CD4-positive, alpha-beta T cell (primary cell): ENCODE measurements at regions of chr10 and their contacts with region 1.

Region 1: GRCh38 chr10:49407552-49408137 is 11.8 kb upstream of the DRGX start:
- DNase-seq: peak; percentile 46 to 79 (median 66)
- ATAC-seq: peak; percentile 54
- H3K4me3 ChIP-seq: no peak overlapping the region
- H3K4me3 Mint-ChIP-seq: no peak overlapping the region
- H3K27ac ChIP-seq: no peak overlapping the region
- H3K27ac Mint-ChIP-seq: no peak overlapping the region
- H3K4me1 ChIP-seq: no peaks in the 10 kb centered on the region
- H3K4me1 Mint-ChIP-seq: no peaks in the 10 kb centered on the region
- H3K27me3 ChIP-seq: peaks cover 19 to 40% of the 10 kb centered on the region in 2 experiments
- H3K27me3 Mint-ChIP-seq: peaks cover 83% of the 10 kb centered on the region
- CTCF ChIP-seq: peak; percentile 70

Region 2: GRCh38 chr10:49068672-49069217 is 338.9 kb before region 1 on chr10:
- CTCF ChIA-PET with region 1: no interaction called
- POLR2A ChIA-PET with region 1: no interaction called
- intact Hi-C with region 1: no loop called
- DNase-seq: no peak
- ATAC-seq: no peak
- H3K4me3 ChIP-seq: no peak overlapping the region
- H3K4me3 Mint-ChIP-seq: no peak overlapping the region
- H3K27ac ChIP-seq: no peak overlapping the region
- H3K27ac Mint-ChIP-seq: no peak overlapping the region
- H3K4me1 ChIP-seq: no peaks in the 10 kb centered on the region
- H3K4me1 Mint-ChIP-seq: no peaks in the 10 kb centered on the region
- H3K27me3 ChIP-seq: peaks cover 0 to 10% of the 10 kb centered on the region in 2 experiments
- H3K27me3 Mint-ChIP-seq: peaks cover 11% of the 10 kb centered on the region
- CTCF ChIP-seq: no peak

Region 3: DNA sequence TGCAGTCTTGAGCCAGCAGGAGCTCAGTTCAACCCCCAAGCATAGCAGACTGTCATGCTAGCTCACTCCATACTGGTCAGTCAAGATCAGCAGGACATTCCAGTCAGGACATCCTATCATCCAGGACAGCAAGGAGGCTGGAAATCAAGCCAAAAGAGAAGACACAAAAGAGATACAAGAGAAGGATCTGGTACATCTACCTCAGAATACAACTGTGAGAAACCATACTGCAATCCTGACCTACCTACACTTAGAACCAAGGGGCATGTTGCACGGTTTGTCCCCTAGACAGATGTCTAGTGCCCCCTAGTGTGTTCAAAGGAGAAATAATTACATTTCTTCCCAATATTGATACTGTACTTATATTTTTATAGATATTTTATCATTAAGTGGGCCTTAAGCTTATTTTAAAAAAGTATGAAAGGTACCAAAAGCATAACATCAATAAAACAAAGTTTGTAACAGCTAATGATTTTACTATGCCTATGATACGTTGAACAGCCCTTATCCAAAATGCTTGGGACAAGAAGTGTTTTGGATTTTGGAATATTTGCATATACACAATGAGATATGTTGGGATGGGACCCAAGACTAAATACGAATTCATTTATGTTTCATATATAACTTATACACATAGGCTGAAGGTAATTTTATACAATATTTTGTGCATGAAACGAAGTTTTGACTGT is 104.6 kb after region 1 on chr10:
- CTCF ChIA-PET with region 1: interaction called, 21 read pairs
- POLR2A ChIA-PET with region 1: interaction called, 7 read pairs
- intact Hi-C with region 1: loop called in 1 of 2 experiments (anchors 1 kb)
- DNase-seq: peak in 4 of 14 experiments; percentile 15 to 58 (median 56)
- ATAC-seq: peak; percentile 51
- H3K4me3 ChIP-seq: no peak overlapping the region
- H3K4me3 Mint-ChIP-seq: no peak overlapping the region
- H3K27ac ChIP-seq: no peak overlapping the region
- H3K27ac Mint-ChIP-seq: no peak overlapping the region
- H3K4me1 ChIP-seq: peaks cover 10% of the 10 kb centered on the region
- H3K4me1 Mint-ChIP-seq: peaks cover 28% of the 10 kb centered on the region
- H3K27me3 ChIP-seq: peaks cover 0 to 2% of the 10 kb centered on the region in 2 experiments
- H3K27me3 Mint-ChIP-seq: peaks cover 20% of the 10 kb centered on the region
- CTCF ChIP-seq: peak; percentile 78

Region 4: GRCh38 chr10:49518982-49519578 is 111.4 kb after region 1 on chr10:
- CTCF ChIA-PET with region 1: interaction called, 7 read pairs
- POLR2A ChIA-PET with region 1: no interaction called
- intact Hi-C with region 1: loop called in 1 of 2 experiments (anchors 1 kb)
- DNase-seq: peak in 5 of 14 experiments; percentile 10 to 68 (median 50)
- ATAC-seq: no peak
- H3K4me3 ChIP-seq: no peak overlapping the region
- H3K4me3 Mint-ChIP-seq: no peak overlapping the region
- H3K27ac ChIP-seq: no peak overlapping the region
- H3K27ac Mint-ChIP-seq: no peak overlapping the region
- H3K4me1 ChIP-seq: no peaks in the 10 kb centered on the region
- H3K4me1 Mint-ChIP-seq: peaks cover 5% of the 10 kb centered on the region
- H3K27me3 ChIP-seq: no peaks in the 10 kb centered on the region
- H3K27me3 Mint-ChIP-seq: peaks cover 3% of the 10 kb centered on the region
- CTCF ChIP-seq: peak; percentile 70

Region 5: GRCh38 chr10:49592726-49593563 is 185.3 kb after region 1 on chr10:
- CTCF ChIA-PET with region 1: no interaction called
- POLR2A ChIA-PET with region 1: no interaction called
- intact Hi-C with region 1: loop called in 1 of 2 experiments (anchors 10 kb)
- DNase-seq: peak; percentile 16 to 62 (median 37)
- ATAC-seq: peak; percentile 59
- H3K4me3 ChIP-seq: no peak overlapping the region
- H3K4me3 Mint-ChIP-seq: no peak overlapping the region
- H3K27ac ChIP-seq: no peak overlapping the region
- H3K27ac Mint-ChIP-seq: no peak overlapping the region
- H3K4me1 ChIP-seq: no peaks in the 10 kb centered on the region
- H3K4me1 Mint-ChIP-seq: no peaks in the 10 kb centered on the region
- H3K27me3 ChIP-seq: peaks cover 4 to 6% of the 10 kb centered on the region in 2 experiments
- H3K27me3 Mint-ChIP-seq: peaks cover 42% of the 10 kb centered on the region
- CTCF ChIP-seq: peak; percentile 84

Region 6: DNA sequence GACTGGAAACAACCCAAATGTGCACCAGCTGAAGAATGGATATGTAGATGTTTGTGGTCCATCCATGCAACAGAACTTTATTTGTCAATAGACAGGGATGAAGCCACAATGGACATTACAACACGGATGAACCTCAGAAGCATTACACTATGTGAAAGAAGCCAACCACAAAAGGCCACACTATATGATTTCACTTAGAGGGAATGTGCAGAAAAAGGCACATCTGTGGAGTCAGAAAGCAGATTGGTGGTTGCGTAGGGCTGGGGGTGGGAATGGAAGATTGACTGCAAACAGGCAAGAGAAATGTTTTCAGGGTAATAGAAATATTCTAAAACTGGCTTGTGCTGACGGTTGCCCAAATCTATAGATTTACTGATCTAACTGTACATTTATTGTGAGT is 625.8 kb after region 1 on chr10:
- CTCF ChIA-PET with region 1: no interaction called
- POLR2A ChIA-PET with region 1: no interaction called
- intact Hi-C with region 1: no loop called
- DNase-seq: no peak
- ATAC-seq: no peak
- H3K4me3 ChIP-seq: no peak overlapping the region
- H3K4me3 Mint-ChIP-seq: no peak overlapping the region
- H3K27ac ChIP-seq: no peak overlapping the region
- H3K27ac Mint-ChIP-seq: no peak overlapping the region
- H3K4me1 ChIP-seq: no peaks in the 10 kb centered on the region
- H3K4me1 Mint-ChIP-seq: no peaks in the 10 kb centered on the region
- H3K27me3 ChIP-seq: peaks cover 0 to 2% of the 10 kb centered on the region in 2 experiments
- H3K27me3 Mint-ChIP-seq: peaks cover 5% of the 10 kb centered on the region
- CTCF ChIP-seq: no peak

Region 7: GRCh38 chr10:51291961-51292360 is 1884.3 kb after region 1 on chr10:
- CTCF ChIA-PET with region 1: no interaction called
- POLR2A ChIA-PET with region 1: no interaction called
- intact Hi-C with region 1: no loop called
- DNase-seq: no peak
- ATAC-seq: no peak
- H3K4me3 ChIP-seq: no peak overlapping the region
- H3K4me3 Mint-ChIP-seq: no peak overlapping the region
- H3K27ac ChIP-seq: no peak overlapping the region
- H3K27ac Mint-ChIP-seq: no peak overlapping the region
- H3K4me1 ChIP-seq: no peaks in the 10 kb centered on the region
- H3K4me1 Mint-ChIP-seq: no peaks in the 10 kb centered on the region
- H3K27me3 ChIP-seq: no peaks in the 10 kb centered on the region
- H3K27me3 Mint-ChIP-seq: no peaks in the 10 kb centered on the region
- CTCF ChIP-seq: no peak